Esophagus muscularis mucosa (tissue), 4 donors: ENCODE measurements at regions of chr2 and their contacts with region 1.

Region 1: GRCh38 chr2:144516981-144517865 is 2.7 kb downstream of the ZEB2 start:
- DNase-seq: no peak
- H3K4me3 ChIP-seq: peak overlapping the region; percentile 64 to 82 (median 69)
- H3K27ac ChIP-seq: peak overlapping the region; percentile 87 to 90 (median 89)
- H3K4me1 ChIP-seq: peaks cover 8 to 40% (median 28%) of the 10 kb centered on the region in 4 donors
- H3K27me3 ChIP-seq: peaks cover 0 to 98% (median 37%) of the 10 kb centered on the region in 4 donors
- CTCF ChIP-seq: no peak
- EP300 ChIP-seq: no peak
- POLR2A ChIP-seq: no peak

Region 2: DNA sequence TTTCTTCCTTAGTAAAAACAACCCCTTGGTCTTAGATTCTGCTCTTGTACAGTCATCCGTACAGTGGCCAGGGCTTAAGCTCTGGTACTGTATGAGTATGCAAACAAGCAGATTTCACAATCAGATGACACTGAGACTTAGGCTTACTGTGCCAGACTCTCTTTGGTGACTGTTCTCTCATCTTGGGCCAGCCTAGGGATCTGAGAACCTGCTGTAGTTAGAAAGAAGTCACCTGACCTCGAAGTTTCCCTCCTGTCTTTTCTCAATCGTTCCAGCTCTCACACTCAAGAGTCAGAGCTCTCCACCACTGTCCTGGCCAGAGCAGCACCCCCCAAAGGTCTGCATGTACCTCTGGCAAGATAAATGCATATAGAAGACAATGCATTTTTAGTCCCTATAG is 60.5 kb before region 1 on chr2:
- intact Hi-C with region 1: loop called (anchors 10 kb)
- DNase-seq: no peak
- H3K4me3 ChIP-seq: no peak overlapping the region
- H3K27ac ChIP-seq: no peak overlapping the region
- H3K4me1 ChIP-seq: peaks cover 20 to 56% (median 36%) of the 10 kb centered on the region in 4 donors
- H3K27me3 ChIP-seq: peaks cover 0 to 5% (median 0%) of the 10 kb centered on the region in 4 donors
- CTCF ChIP-seq: no peak
- EP300 ChIP-seq: no peak
- POLR2A ChIP-seq: no peak

Region 3: DNA sequence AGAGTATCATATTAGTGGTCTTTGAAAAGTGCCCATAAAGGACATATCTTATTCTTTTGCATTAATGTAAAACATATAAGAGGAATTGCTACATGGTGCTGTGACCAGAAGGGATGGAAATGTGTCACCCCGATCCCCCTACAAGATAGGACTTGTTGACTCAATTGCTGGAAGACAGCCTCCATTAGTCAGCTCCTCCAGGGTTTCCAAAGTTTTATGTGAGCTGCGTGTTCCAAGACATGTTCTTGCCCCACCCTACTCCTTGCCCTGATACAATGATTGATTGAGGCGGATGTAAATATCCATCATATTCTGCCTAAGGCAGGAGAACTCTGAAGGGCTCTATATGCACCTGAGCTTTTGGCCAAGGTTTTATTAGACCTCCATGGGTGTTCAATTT is 543.7 kb after region 1 on chr2:
- intact Hi-C with region 1: no loop called
- DNase-seq: no peak
- H3K4me3 ChIP-seq: no peak overlapping the region
- H3K27ac ChIP-seq: no peak overlapping the region
- H3K4me1 ChIP-seq: peaks cover 4 to 7% (median 5%) of the 10 kb centered on the region in 4 donors
- H3K27me3 ChIP-seq: no peaks in the 10 kb centered on the region
- CTCF ChIP-seq: no peak
- EP300 ChIP-seq: no peak
- POLR2A ChIP-seq: no peak